Psoas muscle (tissue), 8 donors: ENCODE measurements at regions of chr9 and their contacts with region 1.

Region 1: DNA sequence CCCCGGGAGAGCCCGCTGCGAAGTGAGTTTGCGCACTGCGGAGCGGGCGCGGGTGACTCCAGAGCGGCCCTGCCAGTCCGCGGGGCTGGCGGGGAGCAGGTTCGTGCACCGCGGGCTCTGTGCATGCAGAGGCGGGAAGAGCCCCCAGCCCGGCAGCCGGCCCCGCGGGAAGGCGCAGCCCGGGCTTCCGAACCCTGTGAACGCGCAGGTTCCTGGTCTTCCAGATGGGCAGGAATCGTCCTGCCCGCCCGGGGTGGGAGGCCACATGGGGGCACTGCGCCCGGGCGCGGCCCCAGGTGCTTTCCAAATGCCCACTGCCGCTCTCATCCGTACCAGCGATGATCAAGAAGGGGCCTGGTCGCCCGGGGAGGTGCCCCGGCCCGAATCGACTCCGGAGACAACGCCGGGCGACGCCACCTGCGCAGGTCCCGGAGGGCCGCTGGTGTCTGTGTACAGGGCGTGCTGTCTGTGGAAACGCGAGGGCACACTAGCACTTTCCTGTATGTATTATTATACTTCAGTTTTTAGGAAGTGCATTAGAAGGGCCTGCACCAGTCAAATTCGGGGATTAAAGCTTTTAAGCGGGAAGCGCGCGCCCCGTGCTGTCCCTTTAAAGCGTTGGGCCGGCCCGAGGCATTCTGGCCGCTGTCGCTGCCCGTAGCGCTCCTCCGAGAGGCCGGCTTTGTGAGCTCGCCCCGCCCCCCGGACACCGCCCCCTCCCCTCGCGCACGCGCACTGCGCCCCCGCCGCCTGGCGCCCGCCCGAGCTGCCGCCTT is at the start of gene WDR5:
- DNase-seq: peak; percentile 94 to 97
- ATAC-seq: peak; percentile 88 to 95 (median 93)
- H3K4me3 ChIP-seq: peak within 1 kb of the TSS; percentile 78
- H3K27ac ChIP-seq: peak within 1 kb of the TSS; percentile 82
- H3K4me1 ChIP-seq: peaks cover 47% of the 10 kb centered on the region
- H3K27me3 ChIP-seq: no peaks in the 10 kb centered on the region
- CTCF ChIP-seq: peak; percentile 16
- total RNA-seq, gene WDR5: 21.4 to 34.1 (median 29.6) TPM

Region 2: DNA sequence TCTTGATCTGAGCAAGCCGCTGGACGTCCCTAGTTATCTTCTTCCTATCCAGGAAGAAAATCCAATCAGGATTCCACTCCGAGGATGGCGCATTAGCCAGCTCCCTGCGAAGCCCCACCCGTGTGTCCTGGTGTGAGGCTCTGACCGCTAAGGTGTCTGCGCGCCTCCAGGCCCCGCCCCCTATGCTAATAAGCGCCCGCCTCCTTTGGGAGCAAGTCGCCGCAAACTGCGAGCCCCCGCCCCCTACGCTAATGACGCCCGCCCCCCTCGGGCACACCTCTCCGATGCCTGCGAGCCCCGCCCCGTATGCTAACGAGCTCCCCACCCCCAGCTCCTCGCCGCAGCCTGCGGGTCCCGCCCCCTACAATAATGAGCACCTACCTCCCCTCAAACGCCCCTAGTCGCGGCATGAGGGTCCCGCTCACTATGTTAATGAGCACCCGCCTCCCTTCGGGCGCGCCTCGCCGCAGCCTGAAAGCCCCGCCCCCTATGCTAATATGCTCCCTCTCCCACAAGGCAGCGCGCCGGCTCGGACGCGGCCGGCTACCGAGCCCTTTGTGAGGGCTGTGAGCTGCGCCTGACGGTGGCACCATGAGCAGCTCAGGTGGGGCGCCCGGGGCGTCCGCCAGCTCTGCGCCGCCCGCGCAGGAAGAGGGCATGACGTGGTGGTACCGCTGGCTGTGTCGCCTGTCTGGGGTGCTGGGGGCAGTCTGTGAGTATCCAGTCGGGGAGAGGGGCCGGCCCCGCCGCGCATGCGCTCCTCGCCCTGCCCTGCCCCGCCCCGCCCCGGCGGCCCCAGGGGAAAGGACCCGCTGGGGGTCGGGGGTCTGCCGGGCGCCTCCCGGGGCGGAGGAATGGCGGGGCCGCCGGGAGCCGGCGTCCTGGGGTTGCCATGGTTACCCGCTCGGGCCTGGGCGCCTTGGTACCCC is 675.8 kb before region 1 on chr9 and contains the start of gene CACFD1:
- intact Hi-C with region 1: no loop called
- DNase-seq: peak; percentile 97 to 98
- ATAC-seq: peak; percentile 92 to 95 (median 92)
- H3K4me3 ChIP-seq: peak within 1 kb of the TSS; percentile 93
- H3K27ac ChIP-seq: peak within 1 kb of the TSS; percentile 92
- H3K4me1 ChIP-seq: peaks cover 17% of the 10 kb centered on the region
- H3K27me3 ChIP-seq: no peaks in the 10 kb centered on the region
- CTCF ChIP-seq: no peak
- total RNA-seq, gene CACFD1: 2.8 to 9.4 (median 7.2) TPM

Region 3: DNA sequence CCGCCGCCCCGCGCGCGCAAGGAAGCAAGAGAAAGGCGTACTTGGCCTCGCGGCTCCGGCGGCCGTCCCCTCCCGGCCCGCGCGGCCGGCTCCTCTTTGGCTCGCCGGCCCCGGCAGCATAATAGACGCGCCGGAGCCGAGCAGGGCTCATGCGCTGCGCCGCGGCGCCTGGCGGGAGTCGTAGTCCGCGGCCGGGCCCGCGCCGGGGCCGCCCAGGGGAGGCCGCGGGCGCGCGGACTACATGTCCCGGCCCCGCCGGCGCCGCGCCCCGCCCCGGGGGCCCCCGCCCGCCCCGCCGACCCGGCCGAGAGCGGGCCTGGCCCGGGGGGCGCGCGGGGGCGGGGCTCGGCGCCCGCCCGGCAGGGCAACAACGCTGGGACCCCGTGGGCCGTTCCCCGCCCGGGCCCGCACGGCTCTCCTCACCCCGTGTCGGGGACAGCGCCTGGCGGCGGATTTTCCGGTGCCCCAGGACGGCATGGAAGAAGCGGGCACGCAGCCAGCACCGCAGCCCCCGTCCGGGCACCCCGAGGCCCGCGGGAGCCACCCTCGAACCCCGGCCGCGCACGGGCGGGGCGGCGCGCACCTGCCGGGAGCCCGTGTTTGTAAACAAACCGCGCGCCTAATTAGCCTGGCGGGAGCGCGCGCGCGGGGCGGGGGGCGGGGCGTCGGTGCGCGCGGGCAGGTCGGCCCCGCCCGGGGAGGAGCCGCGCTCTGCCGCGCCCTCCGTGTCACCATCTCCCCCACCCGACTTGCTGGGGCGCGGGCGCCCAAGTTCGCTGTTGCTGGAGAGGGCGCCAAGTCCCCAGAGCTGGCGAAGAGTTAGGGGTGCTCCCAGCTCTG is 67.4 kb before region 1 on chr9 and contains the start of gene BRD3:
- intact Hi-C with region 1: loop called (anchors 2 to 10 kb)
- DNase-seq: peak; percentile 90 to 91
- ATAC-seq: peak; percentile 87 to 91 (median 90)
- H3K4me3 ChIP-seq: peak within 1 kb of the TSS; percentile 89
- H3K27ac ChIP-seq: peak within 1 kb of the TSS; percentile 97
- H3K4me1 ChIP-seq: peaks cover 32% of the 10 kb centered on the region
- H3K27me3 ChIP-seq: no peaks in the 10 kb centered on the region
- CTCF ChIP-seq: no peak
- total RNA-seq, gene BRD3: 21.7 to 28.2 (median 24.8) TPM

Region 4: DNA sequence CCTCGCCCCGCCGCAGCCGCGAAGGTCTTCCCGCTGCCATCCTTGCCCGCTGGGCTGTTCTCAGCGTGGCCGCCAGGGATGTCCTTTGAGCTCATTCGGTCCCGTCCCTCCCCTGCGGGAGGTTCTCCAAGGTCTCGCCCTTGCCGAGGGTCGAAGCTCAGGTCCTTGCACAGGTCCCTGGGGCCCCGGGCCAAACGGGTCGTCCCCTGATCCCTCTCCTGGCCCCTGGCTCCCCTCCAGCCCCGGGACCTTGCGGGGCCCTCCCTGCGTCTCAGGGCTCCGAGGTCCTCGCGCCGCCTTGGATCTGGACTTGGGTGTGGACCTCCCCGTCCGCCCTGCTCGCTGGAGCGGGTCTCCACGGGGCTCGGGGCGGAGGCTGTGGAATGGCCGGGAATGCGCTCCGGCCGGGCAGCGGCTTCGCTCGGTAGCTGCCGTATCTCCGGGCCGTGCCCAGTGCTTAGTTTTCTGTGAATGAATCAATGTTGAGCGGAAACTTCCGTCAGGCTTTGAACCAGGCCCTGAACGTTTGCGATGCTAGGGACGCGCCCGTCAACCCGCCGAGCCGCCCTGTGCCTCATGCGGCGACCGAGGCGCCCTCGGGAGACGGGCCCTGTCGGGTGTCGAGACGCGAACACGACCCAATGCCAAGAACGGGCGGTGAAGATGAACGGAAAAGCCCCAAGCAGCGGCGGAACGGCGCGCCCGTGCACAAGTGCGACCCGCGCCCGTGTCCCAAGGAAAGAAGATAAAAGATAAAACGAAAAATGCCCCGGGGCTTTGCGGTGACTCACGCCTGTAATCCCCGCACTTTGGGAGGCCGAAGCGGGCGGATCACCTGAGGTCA is 28.0 kb after region 1 on chr9:
- intact Hi-C with region 1: loop called in 1 of 2 experiments (anchors 1 kb)
- DNase-seq: peak; percentile 77 to 84
- ATAC-seq: peak in 1 of 4 donors; percentile 27
- H3K4me3 ChIP-seq: no peak overlapping the region
- H3K27ac ChIP-seq: no peak overlapping the region
- H3K4me1 ChIP-seq: peaks cover 10% of the 10 kb centered on the region
- H3K27me3 ChIP-seq: no peaks in the 10 kb centered on the region
- CTCF ChIP-seq: peak; percentile 44

Region 5: DNA sequence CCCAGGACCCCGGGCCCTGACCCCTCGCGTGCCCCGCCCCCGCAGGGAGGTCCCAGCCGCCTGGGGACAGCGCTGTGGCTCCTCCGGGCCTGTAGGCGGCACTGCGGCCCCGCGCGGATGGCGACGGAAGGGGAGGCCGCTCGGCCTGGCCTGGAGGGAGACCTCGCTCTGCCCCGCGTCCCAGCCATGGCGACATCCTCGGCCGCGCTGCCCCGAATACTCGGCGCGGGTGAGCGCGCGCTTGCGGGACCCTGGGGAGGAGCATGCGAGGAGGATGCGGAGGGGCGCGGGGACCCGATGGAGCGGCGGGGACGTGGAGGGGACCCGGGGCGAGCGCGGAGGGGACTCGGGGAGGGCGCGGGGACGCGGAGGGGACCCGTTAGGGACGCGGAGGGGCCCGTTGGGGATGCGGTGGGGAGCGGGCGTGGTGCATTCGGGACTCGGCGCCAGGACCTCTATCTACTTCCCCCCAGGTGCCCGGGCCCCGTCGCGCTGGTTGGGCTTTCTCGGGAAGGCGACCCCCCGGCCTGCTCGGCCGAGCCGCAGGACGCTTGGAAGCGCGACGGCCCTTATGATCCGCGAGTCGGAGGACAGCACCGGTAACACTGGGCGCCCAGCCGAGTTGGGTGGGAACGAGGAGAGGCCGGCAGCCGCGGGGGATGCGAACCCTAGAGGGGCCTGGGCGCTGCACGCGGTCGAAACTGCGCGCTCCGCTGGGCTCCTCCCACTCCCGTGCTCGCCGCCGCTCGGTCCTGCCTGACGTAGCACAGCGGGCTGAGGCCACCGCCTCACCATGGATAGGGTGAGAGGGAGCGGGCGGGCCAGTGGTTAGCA is 1365.2 kb after region 1 on chr9 and contains the start of gene MRPS2:
- intact Hi-C with region 1: loop called in 1 of 2 experiments (anchors 10 kb)
- DNase-seq: peak; percentile 90 to 92
- ATAC-seq: peak; percentile 96 to 98 (median 98)
- H3K4me3 ChIP-seq: peak within 1 kb of the TSS; percentile 86
- H3K27ac ChIP-seq: peak within 1 kb of the TSS; percentile 65
- H3K4me1 ChIP-seq: peaks cover 10% of the 10 kb centered on the region
- H3K27me3 ChIP-seq: no peaks in the 10 kb centered on the region
- CTCF ChIP-seq: peak; percentile 81
- total RNA-seq, gene MRPS2: 36.8 to 47.1 (median 41.5) TPM